HEK293 (cell line): ENCODE measurements at regions of chr4 and their contacts with region 1.

Region 1: DNA sequence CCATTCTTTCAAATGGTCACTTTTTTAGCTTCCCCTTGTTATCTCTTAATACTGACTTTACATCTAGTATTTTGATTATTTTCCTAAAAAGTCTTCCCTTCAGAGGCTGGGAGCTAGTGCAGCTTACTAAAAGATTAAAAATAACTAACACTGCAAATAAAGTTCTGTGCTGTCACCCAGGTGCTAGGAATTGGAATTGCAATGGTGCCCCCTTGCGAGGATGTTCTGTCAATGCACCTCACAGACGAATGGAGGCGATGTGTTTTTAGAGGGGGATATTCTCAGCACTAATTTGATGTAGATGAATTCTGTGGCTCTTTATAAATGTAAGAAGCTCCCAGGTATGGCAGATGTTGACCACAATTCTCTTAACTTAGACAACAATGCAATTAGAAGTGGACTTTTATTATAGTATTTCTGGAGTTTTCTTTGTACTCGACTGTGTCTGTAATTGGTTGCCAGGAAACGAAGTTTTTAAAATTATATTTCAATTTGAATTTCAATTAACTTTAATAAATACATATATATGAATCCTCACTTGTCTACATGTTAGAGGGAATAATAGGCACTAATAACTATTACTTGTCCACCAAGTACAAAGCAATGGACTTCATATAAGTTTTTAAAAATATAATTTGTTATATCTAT is 22.0 kb upstream of the SMIM31 start:
- H3K4me3 ChIP-seq: no peak overlapping the region
- H3K27ac ChIP-seq: no peak overlapping the region
- H3K4me1 ChIP-seq: no peaks in the 10 kb centered on the region
- CTCF ChIP-seq: no peak

Region 2: DNA sequence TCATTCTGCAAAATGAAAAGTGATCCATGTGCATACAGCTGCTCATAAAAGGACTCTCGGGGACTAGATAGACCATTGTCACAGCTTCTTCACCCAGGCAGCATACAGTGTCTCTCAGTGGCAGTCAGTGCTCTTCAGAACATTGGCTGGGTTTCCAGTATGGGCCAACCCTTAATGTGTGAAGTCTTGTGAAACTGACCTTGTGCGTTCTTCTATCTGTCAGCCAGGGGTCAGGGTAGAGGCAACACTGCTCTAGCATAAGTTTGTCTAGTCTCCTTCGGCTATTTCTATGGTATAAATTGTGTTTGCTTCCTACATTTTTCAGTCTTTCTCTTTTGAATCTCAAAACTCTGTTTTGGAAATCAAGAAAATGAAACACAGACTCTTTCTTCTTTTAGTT is 15.1 kb before region 1 on chr4:
- CTCF ChIA-PET with region 1: interaction called, 12 read pairs
- POLR2A ChIA-PET with region 1: no interaction called
- H3K4me3 ChIP-seq: no peak overlapping the region
- H3K27ac ChIP-seq: no peak overlapping the region
- H3K4me1 ChIP-seq: no peaks in the 10 kb centered on the region
- CTCF ChIP-seq: no peak